ENCODE measurements at regions of chr6 and their contacts with region 1.

Region 1: GRCh38 chr6:169868458-169868857 is 117.0 kb downstream of the ERMARD start:
- DNase-seq: no peak
- ATAC-seq: peak; percentile 68

Region 2: DNA sequence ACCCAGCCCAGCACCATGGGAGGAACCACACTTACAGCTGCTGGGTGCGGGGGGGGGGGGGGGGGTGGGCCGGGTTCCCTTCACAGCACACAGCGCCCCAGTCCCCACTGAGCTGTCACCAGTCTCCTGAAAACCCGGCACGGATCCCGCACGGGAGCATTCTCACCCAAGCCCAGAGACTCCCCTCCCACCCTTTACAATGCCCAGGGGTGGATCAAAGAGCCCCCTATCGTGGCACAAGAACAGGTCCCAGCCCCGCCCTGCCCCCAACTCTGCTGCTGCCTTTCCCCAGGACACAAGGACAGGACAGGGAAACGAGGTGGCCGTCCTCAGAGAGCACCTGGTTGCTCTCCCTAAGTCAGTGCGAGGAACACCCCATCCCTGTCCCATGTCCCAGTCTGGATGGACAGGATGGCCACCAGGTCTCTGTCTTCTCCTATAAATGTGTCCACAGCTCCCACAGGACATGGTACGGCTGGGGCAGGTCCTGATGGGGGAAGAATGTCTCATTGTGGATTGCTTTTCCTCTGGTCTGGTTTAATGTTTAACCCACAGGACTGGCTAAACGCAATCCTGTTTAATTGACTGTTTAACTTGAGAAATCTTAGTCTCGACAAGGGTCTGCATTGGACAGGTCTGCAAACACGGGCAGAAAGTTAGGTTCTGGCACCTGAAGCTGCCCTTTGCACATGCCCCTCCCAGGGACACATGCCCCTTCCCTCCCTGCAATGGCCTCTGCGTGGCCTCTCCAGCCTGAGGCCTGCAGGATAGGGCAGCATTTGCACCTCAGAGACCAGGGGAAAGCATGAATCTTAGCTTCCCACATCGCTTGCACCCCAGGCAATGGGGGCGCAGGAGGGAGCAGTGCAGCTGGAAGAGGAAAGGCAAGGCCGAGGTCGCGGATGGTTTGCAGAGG is 1594.2 kb before region 1 on chr6:
- intact Hi-C with region 1: loop called (anchors 10 kb)
- DNase-seq: no peak
- ATAC-seq: no peak

Region 3: GRCh38 chr6:169839898-169840631 is 28.4 kb before region 1 on chr6:
- intact Hi-C with region 1: no loop called
- DNase-seq: peak; percentile 56
- ATAC-seq: peak; percentile 22